Heart right ventricle (tissue), 16 donors: ENCODE measurements at regions of chr6 and their contacts with region 1.

Region 1: DNA sequence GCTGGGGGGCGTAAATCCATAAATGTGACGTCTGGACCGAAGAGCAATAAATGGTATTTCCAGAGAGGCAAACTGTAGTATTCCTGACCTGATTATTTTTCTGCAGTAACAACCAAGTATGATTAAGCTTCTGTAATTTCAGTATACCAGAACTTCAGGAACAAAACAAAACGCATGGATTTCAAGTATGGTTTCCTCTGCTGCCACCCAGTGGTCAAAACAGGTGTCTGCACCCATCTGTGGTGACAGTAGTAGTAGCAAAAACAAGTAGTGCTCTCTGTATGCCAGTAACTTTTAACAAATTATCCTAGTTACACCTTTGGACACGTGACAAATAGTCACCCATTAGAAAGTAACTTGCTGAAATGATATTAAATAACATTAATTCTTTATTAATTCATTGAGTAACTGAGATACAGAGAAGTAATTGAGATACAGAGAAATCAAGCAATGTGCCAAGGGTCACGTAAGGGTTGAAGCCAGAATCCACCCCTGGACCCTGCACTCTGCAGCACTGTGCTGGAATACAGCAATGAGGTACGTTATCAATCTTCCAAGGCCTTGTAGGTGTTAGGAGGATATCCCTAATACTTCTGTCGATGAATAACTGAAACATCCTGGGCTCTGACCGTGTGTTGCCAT is 7.9 kb downstream of the CALHM4 start:
- DNase-seq: peak; percentile 64 to 71
- ATAC-seq: peak in 7 of 8 donors; percentile 43 to 67 (median 65)
- H3K4me3 ChIP-seq: peak overlapping the region in 1 of 10 donors; percentile 4
- H3K27ac ChIP-seq: no peak overlapping the region
- H3K4me1 ChIP-seq: peaks cover 0 to 12% (median 8%) of the 10 kb centered on the region in 9 donors
- H3K27me3 ChIP-seq: peaks cover 0 to 3% (median 0%) of the 10 kb centered on the region in 7 donors
- CTCF ChIP-seq: peak; percentile 81 to 96 (median 95)

Region 2: GRCh38 chr6:116217069-116217468 is 344.4 kb before region 1 on chr6:
- intact Hi-C with region 1: loop called in 2 of 10 experiments (anchors 5 to 10 kb)
- DNase-seq: no peak
- ATAC-seq: peak in 4 of 8 donors; percentile 51 to 64 (median 54)
- H3K4me3 ChIP-seq: no peak overlapping the region
- H3K27ac ChIP-seq: no peak overlapping the region
- H3K4me1 ChIP-seq: peaks cover 0 to 27% (median 3%) of the 10 kb centered on the region in 9 donors
- H3K27me3 ChIP-seq: no peaks in the 10 kb centered on the region
- CTCF ChIP-seq: peak; percentile 27 to 69 (median 58)

Region 3: GRCh38 chr6:116476002-116476678 is 85.4 kb before region 1 on chr6:
- intact Hi-C with region 1: no loop called
- DNase-seq: no peak
- ATAC-seq: peak in 2 of 8 donors; percentile 54 to 63
- H3K4me3 ChIP-seq: peak overlapping the region in 1 of 10 donors; percentile 23
- H3K27ac ChIP-seq: peak overlapping the region in 1 of 10 donors; percentile 76
- H3K4me1 ChIP-seq: peaks cover 0 to 30% (median 0%) of the 10 kb centered on the region in 9 donors
- H3K27me3 ChIP-seq: no peaks in the 10 kb centered on the region
- CTCF ChIP-seq: no peak

Region 4: DNA sequence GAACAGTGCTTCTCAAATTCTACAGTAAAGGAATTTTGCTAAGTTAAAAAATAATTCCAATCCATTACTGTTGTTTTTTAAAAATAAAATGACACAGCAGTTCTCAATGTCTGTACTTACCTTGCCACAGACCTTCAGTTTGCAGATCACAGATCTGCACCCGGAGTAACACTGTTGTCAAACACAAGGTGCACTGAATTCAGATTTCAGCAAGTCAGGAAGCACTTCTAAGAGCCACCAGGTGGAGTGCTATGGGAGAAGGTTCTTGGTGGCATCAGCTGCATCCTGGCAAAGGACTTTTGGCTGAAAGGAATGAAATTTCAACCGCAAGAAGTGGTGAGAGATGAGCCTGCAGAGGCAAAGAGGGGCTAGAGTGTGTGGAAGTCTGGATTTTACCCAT is 72.2 kb after region 1 on chr6:
- intact Hi-C with region 1: no loop called
- DNase-seq: no peak
- ATAC-seq: no peak
- H3K4me3 ChIP-seq: no peak overlapping the region
- H3K27ac ChIP-seq: no peak overlapping the region
- H3K4me1 ChIP-seq: peaks cover 0 to 10% (median 0%) of the 10 kb centered on the region in 9 donors
- H3K27me3 ChIP-seq: no peaks in the 10 kb centered on the region
- CTCF ChIP-seq: no peak

Region 5: GRCh38 chr6:116648156-116648555 is 86.7 kb after region 1 on chr6:
- intact Hi-C with region 1: no loop called
- DNase-seq: no peak
- ATAC-seq: no peak
- H3K4me3 ChIP-seq: no peak overlapping the region
- H3K27ac ChIP-seq: peak overlapping the region in 3 of 10 donors; percentile 7 to 14 (median 9)
- H3K4me1 ChIP-seq: peaks cover 0 to 7% (median 0%) of the 10 kb centered on the region in 9 donors
- H3K27me3 ChIP-seq: no peaks in the 10 kb centered on the region
- CTCF ChIP-seq: no peak